Lower lobe of right lung (tissue), 2 donors: ENCODE measurements at regions of chr11 and their contacts with region 1.

Region 1: GRCh38 chr11:64000026-64000739 is 13.9 kb downstream of the OTUB1 start:
- DNase-seq: peak; percentile 74
- ATAC-seq: peak; percentile 88 to 89
- H3K4me3 ChIP-seq: peak overlapping the region; percentile 47
- H3K27ac ChIP-seq: no peak overlapping the region
- H3K4me1 ChIP-seq: peaks cover 35% of the 10 kb centered on the region
- H3K27me3 ChIP-seq: peaks cover 9% of the 10 kb centered on the region
- CTCF ChIP-seq: peak; percentile 80

Region 2: DNA sequence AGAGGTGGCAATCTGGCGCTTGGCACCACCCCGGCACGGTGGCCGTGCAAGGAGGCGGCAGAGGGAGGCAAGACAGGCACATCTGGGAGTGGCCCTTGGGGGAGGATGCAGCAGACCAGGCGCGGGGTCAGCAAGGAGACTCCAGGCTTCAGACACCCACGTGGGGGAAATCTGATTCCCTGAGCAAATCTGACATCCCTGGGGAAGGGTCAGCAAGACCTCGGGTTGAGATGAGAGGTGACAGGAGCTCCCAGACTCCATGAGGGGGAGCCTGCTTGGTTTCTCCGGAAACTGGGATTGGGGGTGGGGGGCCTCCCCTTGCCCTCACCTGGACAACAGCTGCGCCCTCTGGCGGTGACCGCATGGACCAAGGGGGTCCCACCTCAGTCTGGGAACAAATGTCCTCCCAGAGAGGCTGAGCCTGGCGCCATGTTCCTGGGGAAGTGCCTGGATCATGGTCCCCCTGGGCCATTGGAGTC is 79.2 kb before region 1 on chr11:
- intact Hi-C with region 1: no loop called
- DNase-seq: no peak
- ATAC-seq: peak in 1 of 2 donors; percentile 35
- H3K4me3 ChIP-seq: no peak overlapping the region
- H3K27ac ChIP-seq: no peak overlapping the region
- H3K4me1 ChIP-seq: peaks cover 41% of the 10 kb centered on the region
- H3K27me3 ChIP-seq: no peaks in the 10 kb centered on the region
- CTCF ChIP-seq: peak; percentile 53

Region 3: DNA sequence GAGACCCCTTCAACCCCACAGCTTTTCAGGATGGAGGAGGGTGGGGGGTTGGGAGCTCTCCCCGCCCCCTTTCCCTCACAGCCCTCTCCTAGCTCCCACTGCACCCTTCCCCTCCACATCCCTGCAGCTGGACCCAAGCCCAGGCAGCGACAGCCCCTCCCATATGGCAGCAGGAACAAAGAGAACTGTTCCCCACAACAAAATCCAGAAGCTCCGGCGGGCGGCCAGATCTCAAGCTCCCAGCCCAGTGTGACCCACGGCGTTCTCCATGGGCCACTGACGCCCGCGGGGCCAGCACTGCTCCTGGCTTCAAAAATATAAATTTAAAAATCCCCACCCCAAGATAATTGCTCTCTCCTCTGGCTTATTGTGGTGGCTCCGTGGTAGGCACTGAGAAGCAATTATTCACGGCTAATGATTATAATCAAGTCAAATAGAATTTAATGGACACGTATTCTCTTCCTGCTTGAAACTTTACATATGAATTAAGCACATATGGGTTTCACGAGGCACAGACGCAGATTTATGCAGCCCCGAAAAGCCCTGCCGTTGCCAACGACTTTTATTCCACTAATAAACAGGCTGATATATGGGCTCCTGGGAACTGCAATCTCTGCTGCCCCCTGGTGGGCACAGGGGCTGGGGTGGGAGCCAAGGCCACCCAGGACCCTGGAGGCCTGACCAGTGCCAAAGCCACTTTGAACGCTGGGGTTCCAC is 148.2 kb after region 1 on chr11:
- intact Hi-C with region 1: loop called (anchors 5 kb)
- DNase-seq: peak; percentile 79
- ATAC-seq: peak; percentile 73 to 79
- H3K4me3 ChIP-seq: peak overlapping the region; percentile 38
- H3K27ac ChIP-seq: no peak overlapping the region
- H3K4me1 ChIP-seq: peaks cover 19% of the 10 kb centered on the region
- H3K27me3 ChIP-seq: no peaks in the 10 kb centered on the region
- CTCF ChIP-seq: peak; percentile 98

Region 4: DNA sequence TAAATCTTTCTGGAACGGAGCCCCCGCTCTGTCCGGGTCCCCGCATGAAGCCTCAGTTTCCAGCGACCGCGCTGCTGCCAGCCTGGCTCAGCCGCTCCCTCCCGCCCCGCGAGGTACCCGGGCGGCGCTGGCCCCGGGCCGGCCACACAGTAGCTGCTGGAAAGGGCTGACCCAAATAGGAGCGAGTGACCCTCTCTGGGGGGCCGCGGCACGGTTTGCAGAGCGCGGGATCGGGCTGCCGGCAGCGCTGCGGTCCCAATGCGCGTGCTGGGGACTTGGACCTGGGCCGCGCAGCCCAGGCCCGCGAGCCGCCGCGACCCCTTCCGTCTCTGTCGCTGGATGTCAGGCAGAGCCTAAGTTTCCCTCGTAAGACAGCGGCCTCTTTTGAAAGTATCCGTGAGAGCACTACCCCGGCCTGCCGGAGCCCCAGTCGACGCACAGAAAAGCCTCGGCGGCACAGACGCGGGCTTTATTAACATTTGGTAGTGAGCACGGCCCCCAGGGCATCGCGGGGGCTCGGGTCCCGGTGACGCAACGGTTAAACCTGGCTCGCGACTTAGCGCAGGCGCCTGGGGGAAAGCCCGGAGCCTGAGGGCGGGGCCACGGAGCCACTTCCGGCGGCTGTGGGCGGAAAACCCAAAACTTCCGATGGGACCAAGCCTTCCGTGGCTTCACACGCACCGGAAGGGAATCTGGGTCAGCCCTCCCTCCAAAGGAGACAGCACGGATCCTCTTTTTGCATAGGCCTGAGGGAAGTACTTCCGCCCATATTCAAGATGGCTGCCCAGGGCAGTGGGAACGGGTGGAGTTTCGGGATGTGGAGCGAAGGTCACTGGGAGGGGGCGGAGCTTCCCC is 269.4 kb after region 1 on chr11:
- intact Hi-C with region 1: no loop called
- DNase-seq: peak; percentile 98
- ATAC-seq: peak; percentile 89 to 94
- H3K4me3 ChIP-seq: peak overlapping the region; percentile 95
- H3K27ac ChIP-seq: peak overlapping the region; percentile 99
- H3K4me1 ChIP-seq: peaks cover 40% of the 10 kb centered on the region
- H3K27me3 ChIP-seq: no peaks in the 10 kb centered on the region
- CTCF ChIP-seq: peak; percentile 19